CD4-positive, alpha-beta T cell (primary cell): ENCODE measurements at regions of chr11 and their contacts with region 1.

Region 1: GRCh38 chr11:10808553-10809372 is at the start of gene EIF4G2:
- DNase-seq: peak; percentile 96 to 99 (median 97)
- ATAC-seq: peak; percentile 91
- H3K4me3 ChIP-seq: peak within 1 kb of the TSS; percentile 86
- H3K4me3 Mint-ChIP-seq: peak within 1 kb of the TSS; percentile 99
- H3K27ac ChIP-seq: peak within 1 kb of the TSS; percentile 95 to 99
- H3K27ac Mint-ChIP-seq: peak within 1 kb of the TSS; percentile 100
- H3K4me1 ChIP-seq: peaks cover 30% of the 10 kb centered on the region
- H3K4me1 Mint-ChIP-seq: peaks cover 59% of the 10 kb centered on the region
- H3K27me3 ChIP-seq: no peaks in the 10 kb centered on the region
- H3K27me3 Mint-ChIP-seq: no peaks in the 10 kb centered on the region
- CTCF ChIP-seq: no peak
- total RNA-seq, gene EIF4G2: 1,001 to 1,008 TPM

Region 2: DNA sequence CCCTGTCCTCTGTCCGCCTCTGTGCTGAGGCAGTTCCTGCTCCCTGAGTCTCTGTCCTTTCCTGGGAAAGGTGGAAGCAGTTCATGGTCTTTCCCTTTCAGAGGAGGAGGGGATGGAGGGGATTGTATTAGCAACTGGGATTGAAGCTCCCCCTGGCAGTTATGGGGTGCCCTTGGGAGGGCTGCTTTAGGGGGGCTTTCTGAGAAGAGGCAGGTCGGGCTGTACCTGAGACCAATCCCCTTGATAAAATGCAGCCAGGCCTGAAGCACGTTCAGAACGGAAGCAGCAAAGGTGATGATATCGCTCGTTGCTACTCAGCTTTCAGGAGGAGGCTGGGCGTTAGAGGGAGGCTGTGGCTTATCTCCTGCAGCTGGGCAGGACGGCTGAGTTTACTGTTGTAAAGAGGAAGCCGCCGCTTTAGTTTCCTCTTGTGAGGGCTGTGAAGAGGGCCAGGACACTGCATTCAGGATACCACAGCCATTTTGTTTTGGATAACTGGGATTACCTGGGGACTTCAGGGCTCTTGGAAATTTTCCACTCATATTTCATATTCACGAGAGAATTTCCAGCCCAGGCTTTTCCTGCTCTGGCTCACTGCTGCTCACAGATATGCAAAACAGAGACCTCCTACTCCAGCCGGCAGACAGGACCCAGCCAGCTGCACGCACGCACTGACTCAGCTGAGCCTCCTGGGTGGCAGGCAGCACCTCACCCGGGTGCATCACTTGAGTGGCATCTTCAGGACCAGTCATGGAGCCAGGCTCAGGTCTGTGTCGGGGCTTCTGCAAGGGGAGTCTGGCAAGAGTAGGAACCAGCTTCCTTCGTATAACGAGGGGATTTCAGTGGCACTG is 352.9 kb before region 1 on chr11:
- CTCF ChIA-PET with region 1: no interaction called
- POLR2A ChIA-PET with region 1: interaction called, 10 read pairs
- intact Hi-C with region 1: loop called in 1 of 2 experiments (anchors 2 kb)
- DNase-seq: peak; percentile 50 to 87 (median 75)
- ATAC-seq: peak; percentile 71
- H3K4me3 ChIP-seq: peak overlapping the region; percentile 66
- H3K4me3 Mint-ChIP-seq: peak overlapping the region; percentile 93
- H3K27ac ChIP-seq: peak overlapping the region; percentile 63 to 89
- H3K27ac Mint-ChIP-seq: peak overlapping the region; percentile 95
- H3K4me1 ChIP-seq: peaks cover 77% of the 10 kb centered on the region
- H3K4me1 Mint-ChIP-seq: peaks cover 78% of the 10 kb centered on the region
- H3K27me3 ChIP-seq: no peaks in the 10 kb centered on the region
- H3K27me3 Mint-ChIP-seq: no peaks in the 10 kb centered on the region
- CTCF ChIP-seq: no peak

Region 3: GRCh38 chr11:10792398-10792975 is 16.3 kb before region 1 on chr11:
- CTCF ChIA-PET with region 1: interaction called, 16 read pairs
- POLR2A ChIA-PET with region 1: interaction called, 62 read pairs
- intact Hi-C with region 1: loop called in 1 of 2 experiments (anchors 2 kb)
- DNase-seq: peak; percentile 72 to 90 (median 80)
- ATAC-seq: peak; percentile 85
- H3K4me3 ChIP-seq: no peak overlapping the region
- H3K4me3 Mint-ChIP-seq: no peak overlapping the region
- H3K27ac ChIP-seq: no peak overlapping the region
- H3K27ac Mint-ChIP-seq: no peak overlapping the region
- H3K4me1 ChIP-seq: peaks cover 19% of the 10 kb centered on the region
- H3K4me1 Mint-ChIP-seq: peaks cover 32% of the 10 kb centered on the region
- H3K27me3 ChIP-seq: no peaks in the 10 kb centered on the region
- H3K27me3 Mint-ChIP-seq: no peaks in the 10 kb centered on the region
- CTCF ChIP-seq: peak; percentile 95

Region 4: DNA sequence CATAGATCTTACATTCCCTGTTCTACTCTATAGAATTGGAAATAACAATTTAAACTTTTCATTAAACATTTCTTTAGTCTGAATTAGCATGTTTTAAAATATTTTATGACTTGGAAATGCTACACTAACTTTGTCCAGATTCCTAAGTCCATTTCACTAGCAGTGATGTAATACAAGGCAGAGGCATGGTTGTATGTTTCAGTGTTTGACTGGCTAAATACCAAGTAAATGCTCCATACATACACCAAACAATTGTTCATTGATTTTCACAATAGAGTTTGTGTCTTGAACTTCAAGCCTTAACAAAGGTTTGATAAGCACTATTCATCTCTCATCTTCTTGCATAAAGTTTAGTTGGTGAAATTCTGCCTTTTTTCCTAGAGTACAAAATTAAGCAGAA is 35.6 kb after region 1 on chr11:
- CTCF ChIA-PET with region 1: no interaction called
- POLR2A ChIA-PET with region 1: interaction called, 57 read pairs
- intact Hi-C with region 1: no loop called
- DNase-seq: no peak
- ATAC-seq: no peak
- H3K4me3 ChIP-seq: no peak overlapping the region
- H3K4me3 Mint-ChIP-seq: no peak overlapping the region
- H3K27ac ChIP-seq: no peak overlapping the region
- H3K27ac Mint-ChIP-seq: no peak overlapping the region
- H3K4me1 ChIP-seq: no peaks in the 10 kb centered on the region
- H3K4me1 Mint-ChIP-seq: peaks cover 11% of the 10 kb centered on the region
- H3K27me3 ChIP-seq: no peaks in the 10 kb centered on the region
- H3K27me3 Mint-ChIP-seq: no peaks in the 10 kb centered on the region
- CTCF ChIP-seq: no peak

Region 5: GRCh38 chr11:10906513-10906912 is 97.8 kb after region 1 on chr11:
- CTCF ChIA-PET with region 1: no interaction called
- POLR2A ChIA-PET with region 1: interaction called, 14 read pairs
- intact Hi-C with region 1: no loop called
- DNase-seq: no peak
- ATAC-seq: no peak
- H3K4me3 ChIP-seq: no peak overlapping the region
- H3K4me3 Mint-ChIP-seq: no peak overlapping the region
- H3K27ac ChIP-seq: no peak overlapping the region
- H3K27ac Mint-ChIP-seq: no peak overlapping the region
- H3K4me1 ChIP-seq: no peaks in the 10 kb centered on the region
- H3K4me1 Mint-ChIP-seq: no peaks in the 10 kb centered on the region
- H3K27me3 ChIP-seq: no peaks in the 10 kb centered on the region
- H3K27me3 Mint-ChIP-seq: peaks cover 5% of the 10 kb centered on the region
- CTCF ChIP-seq: no peak

Region 6: DNA sequence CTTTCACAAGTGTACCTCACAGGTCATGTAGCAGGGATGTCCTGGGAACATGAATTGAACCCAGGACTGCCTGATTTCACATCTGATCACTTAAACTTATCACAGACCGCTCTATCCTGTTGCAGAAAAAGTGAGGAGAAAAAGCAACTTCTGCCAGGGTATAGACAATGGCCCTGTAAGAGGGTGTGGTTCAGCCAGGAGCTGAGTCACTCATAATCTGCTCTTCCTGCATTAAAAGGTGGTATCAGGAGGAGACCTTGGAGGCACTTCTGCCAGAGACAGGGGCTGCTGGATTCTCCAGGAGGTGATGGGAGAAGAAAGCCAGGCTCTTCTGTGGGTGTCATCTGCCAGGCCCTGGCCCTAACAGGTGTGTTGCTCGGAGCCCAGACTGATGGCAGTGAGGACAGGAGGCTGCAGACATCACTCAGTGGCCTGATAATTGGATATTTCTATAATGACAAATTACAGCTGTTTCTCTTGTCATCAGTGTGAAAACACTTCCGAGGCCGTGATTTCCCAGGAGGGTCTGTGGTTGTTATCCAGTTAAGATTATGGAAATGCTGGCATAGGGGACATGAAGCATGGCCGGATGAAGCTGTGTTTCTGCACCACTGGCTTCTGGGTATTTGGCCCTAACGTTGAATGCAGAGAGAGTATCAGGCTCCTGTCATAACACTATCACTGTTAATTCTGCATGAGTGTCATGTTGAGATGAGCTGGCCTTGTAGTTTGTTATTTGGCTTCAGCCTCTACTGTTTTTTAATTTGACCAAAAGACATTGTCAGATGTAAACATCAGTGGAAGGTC is 174.1 kb after region 1 on chr11:
- CTCF ChIA-PET with region 1: no interaction called
- POLR2A ChIA-PET with region 1: no interaction called
- intact Hi-C with region 1: no loop called
- DNase-seq: no peak
- ATAC-seq: no peak
- H3K4me3 ChIP-seq: no peak overlapping the region
- H3K4me3 Mint-ChIP-seq: no peak overlapping the region
- H3K27ac ChIP-seq: no peak overlapping the region
- H3K27ac Mint-ChIP-seq: no peak overlapping the region
- H3K4me1 ChIP-seq: no peaks in the 10 kb centered on the region
- H3K4me1 Mint-ChIP-seq: no peaks in the 10 kb centered on the region
- H3K27me3 ChIP-seq: peaks cover 0 to 4% of the 10 kb centered on the region in 2 experiments
- H3K27me3 Mint-ChIP-seq: no peaks in the 10 kb centered on the region
- CTCF ChIP-seq: no peak

Region 7: DNA sequence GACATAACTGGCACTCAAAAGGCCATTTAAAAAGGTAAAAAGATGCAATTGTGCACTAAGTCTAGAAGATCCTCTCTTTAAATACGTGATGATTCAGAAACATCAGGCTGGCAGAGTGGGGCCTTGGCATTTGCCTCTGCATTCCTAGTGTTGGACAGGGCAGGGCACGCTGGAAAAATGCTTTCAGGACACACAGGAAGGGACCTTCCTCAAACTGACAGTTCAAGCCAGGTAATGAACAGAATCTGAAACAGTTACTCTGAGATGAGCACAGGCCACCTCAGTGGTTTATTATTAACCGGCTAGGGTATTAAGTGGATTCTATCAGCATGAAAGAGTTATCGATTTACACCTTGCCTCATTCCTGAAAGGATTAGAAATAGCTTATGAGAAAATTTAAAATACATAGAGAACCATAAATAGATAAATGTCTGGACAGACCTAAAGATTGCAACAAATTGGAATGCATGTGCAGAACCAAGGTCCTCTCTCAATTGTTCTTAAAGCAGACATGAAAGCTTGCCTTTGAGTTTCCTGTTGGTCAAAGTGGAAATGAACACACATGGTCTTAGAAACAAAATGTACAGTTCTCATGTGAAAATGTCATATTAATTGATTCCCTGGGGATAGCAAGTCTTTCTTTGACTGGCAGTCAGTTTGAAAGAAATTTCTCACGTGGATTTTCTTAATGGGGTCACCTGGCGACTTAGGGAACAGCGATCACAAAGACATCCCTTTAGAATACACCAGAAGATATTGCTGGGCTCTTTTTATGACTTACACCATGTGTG is 565.8 kb after region 1 on chr11:
- CTCF ChIA-PET with region 1: no interaction called
- POLR2A ChIA-PET with region 1: no interaction called
- intact Hi-C with region 1: no loop called
- DNase-seq: no peak
- ATAC-seq: no peak
- H3K4me3 ChIP-seq: no peak overlapping the region
- H3K4me3 Mint-ChIP-seq: no peak overlapping the region
- H3K27ac ChIP-seq: no peak overlapping the region
- H3K27ac Mint-ChIP-seq: no peak overlapping the region
- H3K4me1 ChIP-seq: no peaks in the 10 kb centered on the region
- H3K4me1 Mint-ChIP-seq: no peaks in the 10 kb centered on the region
- H3K27me3 ChIP-seq: peaks cover 0 to 4% of the 10 kb centered on the region in 2 experiments
- H3K27me3 Mint-ChIP-seq: peaks cover 5% of the 10 kb centered on the region
- CTCF ChIP-seq: no peak

Region 8: GRCh38 chr11:11841723-11842420 is 1033.1 kb after region 1 on chr11 and contains the start of gene USP47:
- CTCF ChIA-PET with region 1: no interaction called
- POLR2A ChIA-PET with region 1: interaction called, 30 read pairs
- intact Hi-C with region 1: loop called (anchors 5 kb)
- DNase-seq: peak; percentile 92 to 97 (median 94)
- ATAC-seq: peak; percentile 69
- H3K4me3 ChIP-seq: peak within 1 kb of the TSS; percentile 87
- H3K4me3 Mint-ChIP-seq: no peak within 1 kb of the TSS
- H3K27ac ChIP-seq: peak within 1 kb of the TSS; percentile 91 to 99
- H3K27ac Mint-ChIP-seq: no peak within 1 kb of the TSS
- H3K4me1 ChIP-seq: peaks cover 19% of the 10 kb centered on the region
- H3K4me1 Mint-ChIP-seq: peaks cover 3% of the 10 kb centered on the region
- H3K27me3 ChIP-seq: peaks cover 0 to 5% of the 10 kb centered on the region in 2 experiments
- H3K27me3 Mint-ChIP-seq: peaks cover 16% of the 10 kb centered on the region
- CTCF ChIP-seq: peak; percentile 62
- total RNA-seq, gene USP47: 97.0 to 100 TPM